Mucosa of descending colon (tissue), 3 donors: ENCODE measurements at regions of chr15 and their contacts with region 1.

Region 1: GRCh38 chr15:41972253-41973242 is at the start of gene EHD4:
- DNase-seq: peak; percentile 97 to 99 (median 99)
- ATAC-seq: peak; percentile 92
- H3K4me3 ChIP-seq: peak within 1 kb of the TSS; percentile 90
- H3K4me1 ChIP-seq: peaks cover 16% of the 10 kb centered on the region
- CTCF ChIP-seq: peak; percentile 25
- total RNA-seq, gene EHD4: 26.4 to 39.0 (median 35.0) TPM

Region 2: DNA sequence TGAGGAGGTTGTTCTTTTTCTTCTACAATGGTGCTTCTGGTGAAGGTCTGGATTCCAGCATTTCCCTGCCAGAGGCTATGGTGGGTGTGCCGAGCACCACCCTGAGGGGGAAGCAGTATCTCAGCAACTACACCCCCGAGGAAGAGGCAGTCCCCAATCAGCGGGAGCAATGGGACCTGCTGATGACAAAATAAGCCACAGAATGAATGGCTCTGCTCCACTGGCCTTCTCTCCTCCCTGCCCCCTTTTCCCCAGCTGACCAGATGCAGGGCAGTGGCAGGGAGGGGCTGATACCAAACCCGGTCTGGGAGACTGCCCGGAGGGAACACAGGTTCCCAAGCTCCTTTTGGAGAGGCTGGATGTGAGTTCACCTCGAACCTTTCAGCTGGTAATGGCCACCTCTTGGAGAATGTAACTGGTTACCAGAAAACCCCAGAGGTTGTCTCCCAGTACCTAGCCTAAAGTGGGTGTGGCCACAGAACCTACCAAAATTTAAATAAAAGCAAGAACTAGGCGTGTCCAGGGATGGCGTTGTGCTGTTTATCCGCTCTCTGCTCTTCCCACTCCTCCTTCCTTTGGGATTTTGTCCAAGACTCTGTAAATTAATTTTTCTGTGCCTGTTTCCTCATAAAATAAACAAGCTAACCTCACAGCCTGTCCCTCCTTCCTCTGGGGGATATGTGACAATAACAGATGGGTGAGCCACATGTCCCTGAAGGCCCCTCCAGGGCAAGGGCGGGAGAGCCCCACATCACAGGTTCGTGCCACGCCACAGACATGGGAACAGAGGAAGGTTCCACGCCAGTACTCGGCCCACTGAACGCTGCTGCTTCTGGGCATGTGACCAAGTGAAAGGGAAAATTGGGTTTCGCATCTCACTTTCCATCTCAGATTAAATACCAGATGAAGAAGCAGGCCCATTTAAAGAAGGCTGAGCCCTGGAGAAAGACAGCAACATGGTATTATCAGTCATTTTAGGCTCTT is 43.6 kb before region 1 on chr15:
- intact Hi-C with region 1: loop called in 1 of 2 experiments (anchors 5 kb)
- DNase-seq: peak in 2 of 3 donors; percentile 42 to 71
- ATAC-seq: peak; percentile 3
- H3K4me3 ChIP-seq: no peak overlapping the region
- H3K4me1 ChIP-seq: peaks cover 64% of the 10 kb centered on the region
- CTCF ChIP-seq: no peak

Region 3: GRCh38 chr15:42010434-42010833 is 37.9 kb after region 1 on chr15:
- intact Hi-C with region 1: no loop called
- DNase-seq: no peak
- ATAC-seq: peak; percentile 54
- H3K4me3 ChIP-seq: no peak overlapping the region
- H3K4me1 ChIP-seq: peaks cover 9% of the 10 kb centered on the region
- CTCF ChIP-seq: no peak

Region 4: DNA sequence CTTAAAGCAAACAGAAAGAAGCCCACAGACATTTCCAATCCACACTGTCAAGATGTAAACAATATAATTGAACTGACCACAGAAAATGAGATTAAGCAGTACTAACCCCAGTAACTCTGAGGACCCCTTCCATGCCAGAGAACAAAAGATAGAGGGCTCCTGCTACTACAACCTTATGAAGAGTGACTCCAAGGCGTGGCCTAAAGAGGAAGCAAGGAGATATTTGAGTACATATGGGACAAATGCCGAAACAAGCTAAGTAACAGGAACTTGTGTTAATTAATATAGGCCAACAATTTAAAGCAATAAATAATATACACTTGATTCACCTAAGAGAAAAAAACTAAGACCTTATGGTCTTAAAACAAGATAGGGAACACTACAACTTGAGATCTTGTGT is 260.6 kb after region 1 on chr15:
- intact Hi-C with region 1: no loop called
- DNase-seq: no peak
- ATAC-seq: no peak
- H3K4me3 ChIP-seq: no peak overlapping the region
- H3K4me1 ChIP-seq: peaks cover 6% of the 10 kb centered on the region
- CTCF ChIP-seq: no peak